Common myeloid progenitor, CD34-positive (primary cell): ENCODE measurements at regions of chr2 and their contacts with region 1.

Region 1: DNA sequence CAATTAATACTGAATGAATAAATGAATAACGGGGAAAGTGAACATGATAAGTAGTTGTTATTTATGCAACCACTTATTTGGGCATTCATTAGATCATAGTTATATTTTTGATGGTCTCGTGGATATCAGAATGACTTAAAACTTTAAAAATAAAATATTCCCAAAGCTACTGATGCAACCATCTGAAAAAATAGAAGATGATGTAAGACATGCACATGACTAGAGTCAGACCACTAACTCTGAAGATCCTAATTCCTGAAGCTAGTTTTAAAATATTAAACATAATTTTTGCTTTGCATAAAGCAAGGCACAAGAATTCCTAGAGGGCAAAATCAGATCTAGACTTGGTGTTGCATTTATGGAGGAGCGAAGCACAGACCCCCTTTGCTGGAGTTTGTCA is 616.1 kb downstream of the IRS1 start:
- DNase-seq: no peak
- H3K4me3 ChIP-seq: no peak overlapping the region
- H3K27ac ChIP-seq: no peak overlapping the region
- H3K4me1 ChIP-seq: peaks cover 0 to 26% (median 11%) of the 10 kb centered on the region in 4 experiments
- H3K27me3 ChIP-seq: no peaks in the 10 kb centered on the region

Region 2: GRCh38 chr2:226169751-226170581 is 13.6 kb before region 1 on chr2:
- CTCF ChIA-PET with region 1: interaction called, 11 read pairs
- POLR2A ChIA-PET with region 1: no interaction called
- DNase-seq: no peak
- H3K4me3 ChIP-seq: no peak overlapping the region
- H3K27ac ChIP-seq: no peak overlapping the region
- H3K4me1 ChIP-seq: no peaks in the 10 kb centered on the region
- H3K27me3 ChIP-seq: no peaks in the 10 kb centered on the region